Right lobe of liver (tissue), 6 donors: ENCODE measurements at regions of chr11 and their contacts with region 1.

Region 1: DNA sequence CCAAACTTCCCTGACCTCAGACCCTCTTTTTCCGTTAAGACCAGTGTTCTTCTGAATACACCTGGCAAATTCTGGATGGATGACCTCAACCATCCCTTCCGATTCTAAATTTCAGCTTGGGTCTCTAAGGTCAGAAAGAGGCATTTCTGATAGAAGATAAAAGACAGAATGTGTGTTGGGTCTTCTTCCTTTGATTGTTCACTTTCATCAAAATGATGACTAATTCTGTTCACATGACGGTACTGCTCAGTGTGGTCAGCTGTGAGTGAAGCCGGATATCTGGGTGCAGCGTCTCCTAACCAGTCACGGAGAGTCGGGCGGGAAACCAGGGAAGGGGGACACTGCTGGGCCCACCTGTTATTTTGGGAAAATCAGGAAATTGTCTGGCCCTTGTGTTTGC is 151.6 kb upstream of the NAV2 start:
- DNase-seq: no peak
- ATAC-seq: peak in 2 of 4 donors; percentile 25 to 29
- H3K4me3 ChIP-seq: no peak overlapping the region
- H3K27ac ChIP-seq: no peak overlapping the region
- H3K4me1 ChIP-seq: peaks cover 0 to 28% (median 13%) of the 10 kb centered on the region in 4 donors
- H3K27me3 ChIP-seq: no peaks in the 10 kb centered on the region
- CTCF ChIP-seq: no peak
- POLR2A ChIP-seq: no peak

Region 2: GRCh38 chr11:19734171-19734570 is 173.2 kb after region 1 on chr11:
- intact Hi-C with region 1: no loop called
- DNase-seq: no peak
- ATAC-seq: no peak
- H3K4me3 ChIP-seq: no peak overlapping the region
- H3K27ac ChIP-seq: no peak overlapping the region
- H3K4me1 ChIP-seq: no peaks in the 10 kb centered on the region
- H3K27me3 ChIP-seq: no peaks in the 10 kb centered on the region
- CTCF ChIP-seq: no peak
- POLR2A ChIP-seq: no peak

Region 3: DNA sequence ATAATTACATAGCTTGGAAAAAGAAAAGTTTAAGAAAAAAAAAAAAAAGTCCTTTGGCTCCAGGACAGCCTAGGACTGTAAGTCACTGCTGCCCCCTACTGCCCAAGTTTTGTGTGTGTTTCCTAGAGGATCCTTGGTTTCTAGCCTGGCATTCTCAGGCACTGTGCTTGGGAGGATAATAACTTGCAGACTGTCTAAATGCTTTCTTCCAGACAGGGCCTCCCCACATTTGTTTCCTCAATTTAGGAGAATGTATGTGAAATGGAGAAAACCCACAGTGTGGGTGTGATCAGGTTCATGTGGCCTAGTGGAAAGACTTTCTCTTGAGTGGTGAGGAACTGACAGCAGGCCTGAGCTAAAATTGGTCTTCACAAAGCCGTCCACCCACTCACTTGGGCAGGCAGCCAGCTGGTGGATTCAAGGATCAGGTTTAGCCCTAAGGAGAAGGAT is 342.6 kb after region 1 on chr11:
- intact Hi-C with region 1: loop called (anchors 5 to 10 kb)
- DNase-seq: peak; percentile 60 to 72 (median 67)
- ATAC-seq: peak; percentile 73 to 80 (median 79)
- H3K4me3 ChIP-seq: no peak overlapping the region
- H3K27ac ChIP-seq: no peak overlapping the region
- H3K4me1 ChIP-seq: peaks cover 0 to 20% (median 4%) of the 10 kb centered on the region in 4 donors
- H3K27me3 ChIP-seq: no peaks in the 10 kb centered on the region
- CTCF ChIP-seq: peak; percentile 71 to 85 (median 80)
- POLR2A ChIP-seq: no peak